ENCODE measurements at regions of chr18 and their contacts with region 1.

Region 1: DNA sequence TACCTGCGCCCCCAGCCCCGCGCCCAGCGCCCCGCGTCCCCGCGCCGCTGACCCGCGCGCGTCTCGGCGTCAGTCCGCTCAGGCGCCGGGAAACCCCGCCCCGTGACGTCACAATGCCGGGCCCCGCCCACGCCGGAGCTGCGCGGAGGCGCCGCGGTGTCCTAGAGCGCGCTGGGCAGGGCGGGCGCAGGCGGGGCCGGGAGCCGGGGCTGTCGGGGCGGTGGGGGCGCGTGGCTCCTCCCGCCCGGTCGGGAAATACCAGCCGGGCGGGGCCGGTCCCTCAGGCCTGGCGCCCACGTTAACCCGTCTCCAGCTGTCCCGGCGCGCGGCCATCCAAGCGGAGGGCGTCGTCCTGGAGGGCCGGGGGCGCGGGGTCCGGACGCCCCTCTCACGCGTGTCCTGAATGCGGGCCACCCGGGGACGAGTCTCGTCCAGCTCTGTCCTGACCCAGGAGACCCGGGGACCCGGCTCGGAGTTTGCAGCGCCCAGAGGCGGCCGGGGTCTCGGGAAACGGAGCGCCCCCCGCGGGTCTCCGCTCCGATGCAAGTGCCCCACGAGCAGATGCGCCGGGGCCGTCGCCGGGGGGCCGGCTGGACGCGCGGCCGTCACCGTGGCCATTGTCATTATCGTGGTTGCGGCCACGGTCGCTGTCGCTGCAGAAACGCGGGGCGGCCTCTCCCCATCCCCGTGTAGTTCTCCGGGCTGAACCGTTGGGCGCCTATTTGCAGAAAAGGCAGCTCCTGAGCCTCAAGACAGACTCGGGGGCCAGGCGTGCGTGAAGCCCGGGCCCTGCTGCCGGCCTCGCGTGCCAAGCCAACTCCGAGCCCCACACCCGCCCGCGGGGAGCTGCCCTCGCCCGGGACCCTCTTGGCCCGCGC is at the start of gene SLC66A2:
- DNase-seq: no peak
- H3K4me3 ChIP-seq: peak within 1 kb of the TSS; percentile 90
- H3K27me3 ChIP-seq: no peaks in the 10 kb centered on the region
- CTCF ChIP-seq: no peak
- polyA plus RNA-seq, gene SLC66A2: 19.3 and 26.4 TPM in 2 replicates

Region 2: GRCh38 chr18:79534356-79534755 is 417.5 kb before region 1 on chr18:
- CTCF ChIA-PET with region 1: no interaction called
- POLR2A ChIA-PET with region 1: interaction called, 13 read pairs
- DNase-seq: no peak
- H3K4me3 ChIP-seq: no peak overlapping the region
- H3K27me3 ChIP-seq: peaks cover 16% of the 10 kb centered on the region
- CTCF ChIP-seq: no peak